A549 (cell line): ENCODE measurements at regions of chr3 and their contacts with region 1.

Region 1: DNA sequence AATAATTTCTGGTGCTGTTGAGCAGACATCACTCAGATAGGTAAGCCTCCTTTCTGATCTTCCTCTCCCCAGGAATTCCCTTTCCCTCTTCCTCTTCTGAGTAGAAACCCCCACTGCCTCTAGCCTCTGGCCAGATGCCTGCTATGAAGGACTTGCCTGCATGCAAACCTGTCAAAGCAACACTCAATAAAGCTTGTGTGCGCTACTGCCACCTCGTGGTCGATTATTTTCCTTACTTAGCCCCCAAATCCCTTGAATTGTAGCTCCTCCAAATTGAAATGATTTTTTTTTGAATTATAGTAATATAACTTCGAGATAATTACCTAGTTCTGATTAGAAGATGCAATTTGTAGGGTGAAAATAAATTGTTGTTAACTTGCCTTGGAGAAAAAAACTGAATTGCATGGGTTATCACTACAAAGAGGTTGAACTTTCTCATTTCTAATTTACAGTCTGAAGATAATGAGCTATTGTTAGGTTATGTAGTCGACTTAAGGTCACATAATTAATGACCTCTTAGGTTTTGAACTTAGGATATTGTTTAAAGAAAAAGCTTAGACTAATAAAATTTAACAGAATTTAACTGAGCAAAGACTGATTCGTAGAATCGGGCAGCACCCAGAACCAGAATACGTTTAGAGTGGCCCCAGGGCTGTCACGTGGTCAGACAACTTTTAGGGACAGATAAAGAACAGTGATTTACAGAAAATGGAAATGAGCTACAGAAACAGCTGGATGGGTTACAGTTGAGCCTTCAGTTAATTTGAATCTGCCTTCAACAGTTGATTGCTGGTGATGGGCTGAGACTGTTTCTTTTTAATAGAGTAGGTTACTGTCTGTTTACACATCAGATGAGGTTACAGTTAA is 269.3 kb downstream of the ARPP21 start:
- DNase-seq: peak; percentile 18 to 78
- ATAC-seq: peak; percentile 73 to 86; a peak in 5 of 6 replicates
- H3K4me3 ChIP-seq: no peak overlapping the region
- H3K27ac ChIP-seq: no peak overlapping the region
- H3K4me1 ChIP-seq: no peaks in the 10 kb centered on the region
- CTCF ChIP-seq: peak; percentile 84
- EP300 ChIP-seq: no peak
- POLR2A ChIP-seq: no peak
- RAD21 ChIP-seq: peak; percentile 75 to 84

Region 2: DNA sequence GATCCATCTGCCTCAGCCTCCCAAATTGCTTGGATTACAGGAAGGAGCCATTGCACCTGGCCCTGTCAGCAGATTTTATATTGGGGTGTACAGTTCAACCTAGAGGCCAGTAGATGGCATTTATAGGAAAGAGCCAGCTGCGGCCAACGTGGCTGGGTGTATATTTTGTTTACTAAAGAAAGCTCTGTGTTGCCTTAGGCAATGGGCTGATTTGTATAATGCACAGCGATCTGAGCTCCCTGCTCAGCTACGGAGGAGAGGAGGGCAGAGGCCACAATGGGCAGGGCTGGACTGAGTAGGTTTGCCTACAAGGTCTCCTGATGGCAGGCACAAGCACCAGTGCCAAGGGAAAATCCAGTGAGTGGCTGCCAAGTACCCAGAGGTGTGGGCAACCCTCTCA is 13.1 kb after region 1 on chr3:
- CTCF ChIA-PET with region 1: interaction called, 14 read pairs
- POLR2A ChIA-PET with region 1: no interaction called
- DNase-seq: no peak
- ATAC-seq: no peak
- H3K4me3 ChIP-seq: no peak overlapping the region
- H3K27ac ChIP-seq: no peak overlapping the region
- H3K4me1 ChIP-seq: no peaks in the 10 kb centered on the region
- CTCF ChIP-seq: no peak
- EP300 ChIP-seq: no peak
- POLR2A ChIP-seq: no peak
- RAD21 ChIP-seq: no peak

Region 3: DNA sequence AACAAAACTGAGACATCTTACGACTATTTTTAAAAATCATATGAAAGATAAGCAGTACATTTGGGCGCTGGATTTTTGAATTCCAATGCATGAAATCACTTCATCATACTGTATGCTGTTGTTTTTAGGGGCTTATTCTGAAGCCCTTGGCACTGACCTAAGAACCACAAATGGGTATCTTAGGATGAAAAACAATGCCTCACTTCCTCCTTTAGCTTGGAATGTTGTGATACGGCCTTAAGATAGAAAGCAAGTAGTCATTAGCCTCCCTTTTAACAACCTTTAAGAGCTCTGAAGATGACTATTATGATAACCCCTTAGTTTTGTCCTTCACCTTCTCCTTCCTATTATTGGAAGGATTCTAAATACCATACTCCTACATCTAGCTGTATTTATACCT is 20.6 kb after region 1 on chr3:
- CTCF ChIA-PET with region 1: interaction called, 14 read pairs
- POLR2A ChIA-PET with region 1: no interaction called
- DNase-seq: no peak
- ATAC-seq: no peak
- H3K4me3 ChIP-seq: no peak overlapping the region
- H3K27ac ChIP-seq: no peak overlapping the region
- H3K4me1 ChIP-seq: peaks cover 20% of the 10 kb centered on the region
- CTCF ChIP-seq: no peak
- EP300 ChIP-seq: no peak
- POLR2A ChIP-seq: no peak
- RAD21 ChIP-seq: no peak

Region 4: GRCh38 chr3:36201546-36201945 is 292.9 kb after region 1 on chr3:
- CTCF ChIA-PET with region 1: no interaction called
- POLR2A ChIA-PET with region 1: no interaction called
- DNase-seq: no peak
- ATAC-seq: no peak
- H3K4me3 ChIP-seq: no peak overlapping the region
- H3K27ac ChIP-seq: no peak overlapping the region
- H3K4me1 ChIP-seq: no peaks in the 10 kb centered on the region
- CTCF ChIP-seq: no peak
- EP300 ChIP-seq: no peak
- POLR2A ChIP-seq: no peak
- RAD21 ChIP-seq: no peak